K562 (cell line): ENCODE measurements at regions of chr5 and their contacts with region 1.

Region 1: DNA sequence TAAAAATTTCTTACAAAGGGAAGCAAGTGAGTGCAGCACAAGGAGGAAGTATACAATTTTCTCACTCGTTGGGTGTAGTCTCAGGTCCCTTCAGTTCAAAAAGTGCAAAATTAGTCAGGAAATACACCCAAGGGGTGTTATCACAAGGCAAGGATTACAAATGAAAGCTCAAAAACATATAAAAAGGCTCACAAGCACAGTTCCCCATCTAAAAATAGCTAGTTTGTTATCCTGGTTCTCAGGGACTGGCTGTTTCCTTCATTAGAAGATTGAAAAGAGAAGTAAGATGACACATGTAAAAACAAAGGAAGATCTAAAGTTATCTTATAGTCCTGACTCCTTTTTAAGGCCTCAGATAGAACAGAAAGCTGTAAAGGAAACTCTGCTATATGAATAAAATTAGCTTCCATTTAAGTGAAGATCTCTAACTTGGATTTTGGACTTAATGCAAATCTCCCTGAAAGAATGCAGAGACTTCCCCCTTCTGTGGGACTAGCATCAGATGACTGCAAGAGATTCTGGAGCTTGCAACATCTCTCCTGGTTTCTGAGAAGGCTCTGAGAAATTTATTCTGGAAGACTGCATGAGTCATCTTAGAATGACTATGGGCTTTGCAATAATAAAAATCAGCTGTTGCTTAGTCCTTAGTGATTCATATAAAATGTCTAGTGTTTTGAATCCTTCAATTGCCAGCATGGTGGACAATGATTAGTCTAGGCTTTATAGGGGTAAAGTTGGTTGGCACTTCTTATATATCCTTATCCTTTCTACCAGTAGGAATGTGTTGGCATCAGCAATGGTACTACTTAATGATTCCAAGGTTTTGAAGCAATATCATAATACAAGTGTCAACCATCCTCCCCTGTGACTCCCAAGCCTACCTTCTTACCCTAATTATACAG is 25.4 kb downstream of the DAB2 start:
- DNase-seq: peak; percentile 43 to 83 (median 59)
- ATAC-seq: peak; percentile 90
- H3K4me3 ChIP-seq: no peak overlapping the region
- H3K27ac ChIP-seq: peak overlapping the region; percentile 77
- H3K4me1 ChIP-seq: peaks cover 4 to 34% of the 10 kb centered on the region in 2 experiments; a peak in 4 of 5 replicates
- H3K27me3 ChIP-seq: no peaks in the 10 kb centered on the region
- CTCF ChIP-seq: no peak
- EP300 ChIP-seq: peak; percentile 92
- POLR2A ChIP-seq: no peak
- RAD21 ChIP-seq: peak in 1 of 2 experiments; percentile 27; a peak in 1 of 4 replicates

Region 2: GRCh38 chr5:39411051-39411450 is 11.7 kb after region 1 on chr5:
- CTCF ChIA-PET with region 1: no interaction called
- POLR2A ChIA-PET with region 1: interaction called, 67 read pairs
- in situ Hi-C with region 1: no loop called
- intact Hi-C with region 1: no loop called
- DNase-seq: no peak
- ATAC-seq: no peak
- H3K4me3 ChIP-seq: no peak overlapping the region
- H3K27ac ChIP-seq: no peak overlapping the region
- H3K4me1 ChIP-seq: no peaks in the 10 kb centered on the region
- H3K27me3 ChIP-seq: no peaks in the 10 kb centered on the region
- CTCF ChIP-seq: no peak
- EP300 ChIP-seq: no peak
- POLR2A ChIP-seq: no peak
- RAD21 ChIP-seq: no peak

Region 3: DNA sequence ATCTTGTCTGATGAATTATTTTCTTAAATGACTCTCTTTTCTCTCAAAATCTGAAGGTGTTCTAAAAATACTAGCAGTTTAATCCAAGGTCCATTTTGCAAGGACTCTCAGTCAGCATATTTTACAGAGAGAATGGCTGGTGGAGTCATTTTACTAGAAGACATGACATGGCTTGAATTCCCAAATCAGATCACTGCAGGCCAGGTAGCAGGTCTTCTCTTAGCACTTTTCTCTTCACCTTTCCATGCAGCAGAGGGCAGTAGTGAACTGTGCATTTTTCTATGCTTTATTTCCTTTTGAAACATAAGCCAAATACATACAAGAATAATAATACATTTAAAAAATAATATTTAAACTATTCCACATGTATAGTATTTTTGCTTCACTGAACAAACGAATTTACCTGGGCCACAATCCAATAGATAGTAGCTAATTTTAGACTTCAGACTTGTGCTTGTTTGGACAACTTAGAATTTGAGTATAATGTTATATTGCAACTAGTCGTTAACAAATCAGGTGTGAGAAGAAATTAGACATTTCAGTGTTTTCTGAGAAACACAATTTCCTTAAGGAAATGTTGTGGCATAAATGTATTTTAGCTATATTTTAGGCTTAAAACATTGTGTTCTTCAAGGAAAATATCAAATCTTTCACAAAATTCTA is 314.8 kb after region 1 on chr5:
- CTCF ChIA-PET with region 1: no interaction called
- POLR2A ChIA-PET with region 1: no interaction called
- in situ Hi-C with region 1: no loop called
- intact Hi-C with region 1: no loop called
- DNase-seq: peak; percentile 24 to 64 (median 34)
- ATAC-seq: peak; percentile 72
- H3K4me3 ChIP-seq: no peak overlapping the region
- H3K27ac ChIP-seq: no peak overlapping the region
- H3K4me1 ChIP-seq: no peaks in the 10 kb centered on the region
- H3K27me3 ChIP-seq: no peaks in the 10 kb centered on the region
- CTCF ChIP-seq: peak; percentile 39 to 75 (median 51); a peak in 5 of 6 replicates
- EP300 ChIP-seq: no peak
- POLR2A ChIP-seq: no peak
- RAD21 ChIP-seq: peak; percentile 76 to 79